Gastrocnemius medialis (tissue), 4 donors: ENCODE measurements at regions of chr5 and their contacts with region 1.

Region 1: GRCh38 chr5:125484742-125485641 is 738.6 kb upstream of the ZNF608 start:
- DNase-seq: peak; percentile 84 to 86
- ATAC-seq: peak; percentile 95 to 96
- H3K4me3 ChIP-seq: peak overlapping the region in 3 of 4 donors; percentile 15 to 27 (median 21)
- H3K27ac ChIP-seq: peak overlapping the region; percentile 67 to 94 (median 88)
- H3K4me1 ChIP-seq: peaks cover 7 to 30% of the 10 kb centered on the region in 2 donors
- H3K27me3 ChIP-seq: no peaks in the 10 kb centered on the region
- CTCF ChIP-seq: no peak
- POLR2A ChIP-seq: no peak

Region 2: DNA sequence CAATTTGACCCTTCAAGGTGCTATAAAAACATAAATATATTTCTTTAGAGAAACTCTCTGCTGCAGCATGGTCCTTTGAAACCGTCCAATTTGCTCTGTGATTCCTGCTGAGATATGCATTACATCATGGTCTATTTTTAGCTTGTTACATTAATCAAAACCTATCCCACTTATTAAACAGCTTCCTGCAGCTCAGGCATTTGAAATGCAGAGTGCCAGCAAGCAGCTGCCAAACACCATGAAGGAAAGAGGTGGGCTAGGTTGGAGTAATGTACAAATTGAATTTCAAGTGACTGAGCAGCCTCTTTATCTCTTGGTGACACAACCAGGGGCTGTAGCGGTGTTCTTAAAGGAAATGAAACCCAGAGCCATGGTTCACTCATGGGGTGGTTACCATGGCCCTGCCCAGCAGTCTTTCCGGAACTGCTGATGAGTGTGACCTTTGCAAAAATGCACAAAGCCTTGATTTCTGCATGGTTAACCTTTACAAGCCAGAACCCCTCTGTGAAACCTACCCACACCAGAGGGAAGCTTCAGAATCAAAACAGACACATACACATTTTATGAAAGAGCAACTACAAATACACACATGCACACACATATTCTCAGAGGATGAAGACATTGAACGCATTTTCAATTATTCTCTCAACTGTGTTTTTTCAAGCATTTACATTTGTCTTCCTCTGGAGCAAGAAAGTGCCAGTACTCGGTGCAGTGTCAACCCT is 582.7 kb before region 1 on chr5:
- in situ Hi-C with region 1: no loop called
- intact Hi-C with region 1: loop called (anchors 2 kb)
- DNase-seq: no peak
- ATAC-seq: no peak
- H3K4me3 ChIP-seq: no peak overlapping the region
- H3K27ac ChIP-seq: peak overlapping the region in 1 of 4 donors; percentile 8
- H3K4me1 ChIP-seq: peaks cover 34 to 38% of the 10 kb centered on the region in 2 donors
- H3K27me3 ChIP-seq: no peaks in the 10 kb centered on the region
- CTCF ChIP-seq: no peak
- POLR2A ChIP-seq: no peak

Region 3: DNA sequence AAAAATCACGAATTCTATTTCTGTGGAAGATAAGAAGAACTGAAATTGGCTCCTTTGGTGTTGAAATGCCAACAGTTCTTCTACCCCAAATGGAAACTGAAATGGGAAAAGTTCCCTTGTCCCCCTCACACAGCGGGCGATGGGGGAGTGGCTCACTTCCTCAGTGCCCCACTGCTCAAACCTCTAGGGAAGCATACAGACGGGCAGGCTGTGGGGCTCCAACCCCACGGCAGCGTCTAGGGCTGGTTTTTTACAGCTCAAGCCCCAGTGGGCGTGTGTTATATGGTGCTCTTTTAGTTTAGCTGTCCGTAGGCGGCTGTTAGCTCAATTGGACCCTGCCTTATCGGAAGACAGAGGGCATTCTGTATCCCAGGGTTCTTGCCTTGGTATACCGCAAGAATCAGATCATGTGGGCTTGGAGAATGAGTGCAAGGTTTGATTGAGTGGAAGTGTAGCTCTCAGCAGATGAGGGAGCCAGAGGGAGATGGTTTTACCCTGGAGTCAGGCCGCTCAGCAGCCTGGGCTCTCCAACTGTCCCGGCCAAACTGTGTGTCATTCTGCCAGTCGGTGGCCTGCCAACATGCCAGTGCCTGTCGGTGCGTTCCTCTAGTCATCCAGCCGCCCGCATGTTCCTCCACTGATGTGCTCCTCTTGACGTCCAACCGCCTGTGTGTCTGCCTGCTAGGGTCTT is 572.2 kb before region 1 on chr5:
- in situ Hi-C with region 1: loop called in 1 of 4 experiments (anchors 5 kb)
- intact Hi-C with region 1: loop called (anchors 2 kb)
- DNase-seq: peak; percentile 82 to 89
- ATAC-seq: peak; percentile 98 to 99
- H3K4me3 ChIP-seq: no peak overlapping the region
- H3K27ac ChIP-seq: peak overlapping the region in 3 of 4 donors; percentile 60 to 67 (median 64)
- H3K4me1 ChIP-seq: peaks cover 15 to 19% of the 10 kb centered on the region in 2 donors
- H3K27me3 ChIP-seq: no peaks in the 10 kb centered on the region
- CTCF ChIP-seq: peak in 2 of 5 experiments; percentile 11 to 29
- POLR2A ChIP-seq: no peak

Region 4: DNA sequence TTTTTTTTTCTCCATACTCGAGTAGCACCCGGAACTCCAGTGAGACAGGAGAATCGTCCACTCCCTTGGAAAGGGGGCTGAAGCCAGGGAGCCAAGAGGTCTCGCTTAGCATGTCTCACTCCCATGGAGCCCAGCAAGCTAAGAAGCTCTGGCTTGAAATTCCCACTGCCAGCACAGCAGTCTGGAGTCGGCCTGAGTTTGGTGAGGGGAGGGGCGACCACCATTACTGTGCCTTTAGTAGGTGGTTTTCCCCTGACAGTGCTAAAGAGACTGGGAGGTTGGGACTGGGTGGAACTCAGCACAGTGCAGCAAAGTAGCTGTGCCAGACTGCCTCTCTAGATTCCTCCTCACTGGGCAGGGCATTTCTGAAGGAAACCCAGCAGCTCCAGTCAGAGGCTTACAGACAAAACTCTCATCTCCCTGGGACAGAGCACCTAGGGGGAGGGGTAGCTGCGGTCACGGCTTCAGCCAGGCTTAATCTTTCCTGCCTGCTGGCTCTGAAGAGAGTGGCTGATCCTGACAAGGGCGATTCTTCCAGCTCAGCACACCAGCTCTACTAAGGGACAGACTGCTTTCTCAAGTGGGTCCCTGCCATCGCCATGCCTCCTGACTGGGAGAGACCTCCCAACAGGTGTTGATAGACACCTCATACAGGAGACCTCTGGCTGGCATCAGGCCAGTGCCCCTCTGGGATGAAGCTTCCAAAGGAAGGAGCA is 324.0 kb before region 1 on chr5:
- in situ Hi-C with region 1: no loop called
- intact Hi-C with region 1: no loop called
- DNase-seq: no peak
- ATAC-seq: no peak
- H3K4me3 ChIP-seq: no peak overlapping the region
- H3K27ac ChIP-seq: no peak overlapping the region
- H3K4me1 ChIP-seq: no peaks in the 10 kb centered on the region
- H3K27me3 ChIP-seq: no peaks in the 10 kb centered on the region
- CTCF ChIP-seq: no peak
- POLR2A ChIP-seq: no peak

Region 5: DNA sequence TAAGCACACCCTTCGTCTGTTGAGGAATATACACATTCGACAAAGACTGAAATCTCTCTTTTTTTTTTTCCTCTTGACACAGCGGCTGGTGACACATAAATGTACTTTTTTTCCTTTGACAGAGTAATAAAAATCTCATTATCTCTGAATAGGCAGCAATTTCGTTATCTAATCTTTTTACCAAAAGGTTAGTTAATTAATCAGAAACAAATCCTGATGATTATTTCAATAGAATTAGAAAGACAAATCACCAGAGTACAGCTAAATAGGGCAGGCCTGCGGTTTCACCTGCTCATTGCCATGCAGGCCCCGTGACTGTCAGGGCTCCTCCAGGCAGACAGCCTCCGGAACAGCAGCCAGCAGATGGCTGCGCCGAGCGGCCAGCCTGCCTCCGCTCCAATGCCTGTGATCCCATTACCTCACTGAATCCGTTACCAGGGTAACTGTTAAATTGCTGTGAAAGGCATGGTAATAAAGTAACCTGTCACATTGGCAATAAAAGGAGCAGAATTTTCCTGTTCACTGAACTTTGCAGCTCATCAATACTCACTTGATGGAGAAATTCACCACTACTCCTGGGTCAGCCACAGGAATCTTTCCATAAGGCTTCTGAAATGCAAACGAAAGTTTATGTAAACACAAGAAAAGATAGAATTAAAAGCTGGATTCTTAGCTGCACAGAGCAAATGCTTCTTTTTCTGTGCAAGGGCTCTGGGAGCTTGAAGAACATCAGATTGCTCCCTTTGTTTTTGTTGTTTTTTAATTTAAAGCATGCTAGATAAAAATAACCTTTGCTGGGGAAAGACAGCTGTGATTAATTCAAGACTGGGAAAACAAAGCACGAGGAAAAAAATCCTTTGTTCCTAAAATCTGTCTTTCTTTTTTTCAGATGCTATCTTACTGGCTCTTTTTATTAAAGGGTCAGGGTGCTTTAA is 72.2 kb before region 1 on chr5:
- in situ Hi-C with region 1: loop called in 1 of 4 experiments (anchors 10 kb)
- intact Hi-C with region 1: loop called (anchors 1 kb)
- DNase-seq: peak; percentile 75 to 78
- ATAC-seq: peak; percentile 87 to 89
- H3K4me3 ChIP-seq: peak overlapping the region in 3 of 4 donors; percentile 6 to 33 (median 7)
- H3K27ac ChIP-seq: peak overlapping the region; percentile 44 to 67 (median 66)
- H3K4me1 ChIP-seq: peaks cover 31 to 33% of the 10 kb centered on the region in 2 donors
- H3K27me3 ChIP-seq: no peaks in the 10 kb centered on the region
- CTCF ChIP-seq: peak in 3 of 5 experiments; percentile 29 to 53 (median 50)
- POLR2A ChIP-seq: no peak

Region 6: DNA sequence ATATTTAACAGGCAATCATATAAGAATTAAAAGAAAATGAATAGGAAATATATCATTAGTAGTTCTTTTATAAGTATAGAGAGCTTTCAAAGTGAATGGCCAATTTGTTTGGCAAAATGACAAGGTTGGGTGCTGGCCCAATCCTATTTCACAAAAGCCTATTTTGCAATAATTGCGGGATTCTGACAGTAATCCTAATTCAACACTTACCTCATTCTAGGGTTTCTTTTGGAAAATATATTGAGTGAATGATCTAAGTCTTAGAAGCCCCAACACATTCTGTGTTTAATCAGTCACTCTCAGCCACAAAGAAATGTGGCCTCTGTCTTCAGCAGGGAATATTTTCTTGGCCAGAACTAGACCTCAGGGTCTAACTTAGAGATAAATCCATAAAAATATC is 97.4 kb after region 1 on chr5:
- in situ Hi-C with region 1: no loop called
- intact Hi-C with region 1: no loop called
- DNase-seq: no peak
- ATAC-seq: peak in 1 of 2 donors; percentile 43
- H3K4me3 ChIP-seq: no peak overlapping the region
- H3K27ac ChIP-seq: no peak overlapping the region
- H3K4me1 ChIP-seq: peaks cover 14 to 15% of the 10 kb centered on the region in 2 donors
- H3K27me3 ChIP-seq: no peaks in the 10 kb centered on the region
- CTCF ChIP-seq: no peak
- POLR2A ChIP-seq: no peak

Region 7: DNA sequence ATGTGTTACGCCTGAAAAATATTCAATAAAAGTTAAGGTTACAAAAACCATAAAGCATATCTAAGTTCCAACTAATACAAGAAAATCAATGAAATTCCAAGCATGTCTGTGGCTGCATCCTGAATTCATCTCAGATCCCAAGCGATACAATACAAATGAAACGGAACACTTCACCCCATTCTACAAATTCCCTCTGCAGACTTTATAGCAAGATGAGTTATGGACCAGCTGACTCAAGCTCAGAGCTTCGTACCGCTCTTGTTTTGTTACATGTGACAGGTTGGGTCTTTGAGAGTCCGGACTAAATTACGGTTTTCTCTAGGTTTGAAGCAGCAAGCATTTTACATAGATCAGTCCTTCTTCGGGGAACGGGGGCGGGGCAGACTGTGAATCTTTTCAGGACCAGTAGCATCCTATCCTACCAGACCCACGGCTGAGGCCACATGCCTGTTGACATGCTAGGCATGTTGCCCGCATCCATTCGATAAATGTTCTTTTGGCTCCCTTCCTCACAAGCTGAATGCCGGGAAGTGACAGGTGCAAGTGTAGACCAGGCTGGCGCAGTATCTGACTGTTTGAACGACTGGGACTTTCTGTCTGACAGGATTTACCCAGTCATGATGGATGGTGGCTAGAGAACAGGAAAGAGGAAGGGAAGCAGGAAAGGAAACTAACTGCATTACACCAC is 127.2 kb after region 1 on chr5:
- in situ Hi-C with region 1: no loop called
- intact Hi-C with region 1: loop called (anchors 5 kb)
- DNase-seq: peak; percentile 4 to 18
- ATAC-seq: peak; percentile 73 to 91
- H3K4me3 ChIP-seq: peak overlapping the region in 1 of 4 donors; percentile 5
- H3K27ac ChIP-seq: no peak overlapping the region
- H3K4me1 ChIP-seq: peaks cover 5 to 9% of the 10 kb centered on the region in 2 donors
- H3K27me3 ChIP-seq: no peaks in the 10 kb centered on the region
- CTCF ChIP-seq: no peak
- POLR2A ChIP-seq: no peak